ENCODE measurements at regions of chr13 and their contacts with region 1.

Region 1: DNA sequence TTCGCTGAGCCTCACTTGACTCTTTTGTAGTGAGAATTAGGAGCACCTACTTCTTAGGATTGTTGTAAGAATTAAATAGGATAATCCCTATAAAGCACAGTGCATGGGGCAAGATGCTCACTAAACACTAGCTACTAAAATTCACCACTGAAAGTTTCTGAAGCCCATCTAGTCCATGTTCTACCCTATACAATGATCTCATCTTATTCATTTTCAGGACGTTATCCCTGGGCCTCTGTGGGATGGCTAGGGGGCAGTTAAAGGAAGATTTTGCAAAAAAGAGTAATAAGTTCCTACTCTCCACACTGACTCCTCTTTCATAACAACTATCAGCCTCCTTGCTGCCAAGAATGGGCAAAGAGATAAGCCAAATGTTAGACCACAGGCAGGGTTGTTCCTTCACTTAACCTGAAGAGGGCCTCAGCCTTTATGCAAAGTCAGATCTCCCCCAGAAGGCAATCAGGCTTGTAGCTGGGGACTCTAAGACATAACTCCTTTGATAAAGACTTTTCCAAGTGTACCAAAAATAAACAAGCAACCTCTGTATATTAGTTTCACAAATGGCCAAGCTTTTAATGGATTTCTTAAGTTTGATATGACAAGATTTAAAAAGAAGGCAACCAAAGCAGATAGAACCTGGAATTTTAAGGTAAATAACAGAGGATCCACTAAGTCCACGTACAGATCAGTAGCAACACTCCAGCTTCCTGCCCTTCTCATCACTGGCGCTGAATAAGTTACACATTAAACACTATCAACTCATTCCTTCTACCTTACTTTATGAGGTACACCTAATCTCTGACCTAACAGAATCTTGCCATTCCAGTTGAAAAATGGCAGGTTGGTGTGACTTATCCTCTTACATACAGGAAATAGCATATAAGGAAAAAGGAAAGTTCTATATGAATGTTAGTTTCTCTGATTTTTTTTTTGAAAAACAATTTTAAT is 44.4 kb downstream of the ELF1 start:
- DNase-seq: peak in 27 of 35 experiments; percentile 14 to 77 (median 35)
- ATAC-seq: peak; percentile 75 to 82 (median 78)
- H3K4me3 ChIP-seq: no peak overlapping the region
- H3K4me3 Mint-ChIP-seq: peak overlapping the region; percentile 64 to 96 (median 70)
- H3K27ac ChIP-seq: peak overlapping the region; percentile 47
- H3K27ac Mint-ChIP-seq: peak overlapping the region; percentile 87 to 92
- H3K4me1 ChIP-seq: peaks cover 29 to 68% of the 10 kb centered on the region in 2 experiments
- H3K4me1 Mint-ChIP-seq: peaks cover 84 to 99% (median 94%) of the 10 kb centered on the region in 3 donors
- H3K27me3 ChIP-seq: no peaks in the 10 kb centered on the region
- H3K27me3 Mint-ChIP-seq: no peaks in the 10 kb centered on the region

Region 2: DNA sequence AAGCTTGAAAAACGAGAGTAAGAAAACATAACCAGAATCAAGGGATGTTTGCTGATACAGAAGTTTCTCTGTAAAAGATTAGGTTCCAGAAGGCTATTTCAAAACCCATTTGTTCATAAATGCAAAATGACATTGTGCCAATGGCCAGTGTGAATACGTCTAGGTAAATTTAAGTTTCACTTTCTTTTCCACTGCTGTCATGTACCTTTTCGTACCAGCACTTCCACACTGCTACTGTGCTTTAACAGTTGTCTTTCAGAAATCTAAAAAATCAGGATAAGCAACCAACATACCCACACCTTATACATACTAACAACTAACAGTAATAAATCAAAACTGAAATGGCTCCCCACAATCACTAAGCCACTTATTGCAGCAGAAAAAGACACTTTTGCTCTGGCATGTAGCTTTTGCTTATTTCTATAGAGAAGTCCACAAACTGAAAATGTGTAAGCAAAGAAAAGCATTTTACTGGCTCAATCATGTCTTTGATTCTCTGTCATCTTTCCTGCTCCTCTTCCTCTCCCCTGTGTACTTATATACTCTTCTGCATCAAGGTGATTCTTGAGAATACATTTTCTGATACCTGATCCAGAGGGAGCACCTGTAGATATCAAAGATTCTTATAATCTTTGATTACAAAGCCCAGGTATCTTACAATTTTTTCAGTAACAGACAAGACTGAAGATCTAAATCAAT is 10.1 kb after region 1 on chr13:
- CTCF ChIA-PET with region 1: interaction called, 6 to 25 read pairs
- POLR2A ChIA-PET with region 1: interaction called in 1 of 2 experiments, 13 read pairs
- DNase-seq: peak in 1 of 35 experiments; percentile 73
- ATAC-seq: peak; percentile 39 to 54 (median 46)
- H3K4me3 ChIP-seq: peak overlapping the region; percentile 39 to 45
- H3K4me3 Mint-ChIP-seq: peak overlapping the region; percentile 79 to 96 (median 85)
- H3K27ac ChIP-seq: peak overlapping the region; percentile 94
- H3K27ac Mint-ChIP-seq: peak overlapping the region; percentile 93 to 98
- H3K4me1 ChIP-seq: peaks cover 27 to 47% of the 10 kb centered on the region in 2 experiments
- H3K4me1 Mint-ChIP-seq: peaks cover 56 to 72% (median 70%) of the 10 kb centered on the region in 3 donors
- H3K27me3 ChIP-seq: no peaks in the 10 kb centered on the region
- H3K27me3 Mint-ChIP-seq: no peaks in the 10 kb centered on the region

Region 3: GRCh38 chr13:40992678-40993518 is 18.2 kb after region 1 on chr13:
- CTCF ChIA-PET with region 1: interaction called, 6 to 16 read pairs
- POLR2A ChIA-PET with region 1: interaction called in 1 of 2 experiments, 9 read pairs
- DNase-seq: peak in 1 of 35 experiments; percentile 56
- ATAC-seq: peak; percentile 41 to 64 (median 48)
- H3K4me3 ChIP-seq: no peak overlapping the region
- H3K4me3 Mint-ChIP-seq: no peak overlapping the region
- H3K27ac ChIP-seq: peak overlapping the region; percentile 60
- H3K27ac Mint-ChIP-seq: peak overlapping the region; percentile 80 to 90
- H3K4me1 ChIP-seq: peaks cover 31 to 40% of the 10 kb centered on the region in 2 experiments
- H3K4me1 Mint-ChIP-seq: peaks cover 82 to 91% (median 88%) of the 10 kb centered on the region in 3 donors
- H3K27me3 ChIP-seq: no peaks in the 10 kb centered on the region
- H3K27me3 Mint-ChIP-seq: no peaks in the 10 kb centered on the region

Region 4: GRCh38 chr13:41013835-41014234 is 39.1 kb after region 1 on chr13:
- CTCF ChIA-PET with region 1: interaction called, 4 to 35 read pairs
- POLR2A ChIA-PET with region 1: interaction called, 5 to 25 read pairs
- DNase-seq: no peak
- ATAC-seq: no peak
- H3K4me3 ChIP-seq: peak overlapping the region in 1 of 2 donors; percentile 47
- H3K4me3 Mint-ChIP-seq: peak overlapping the region; percentile 85 to 90 (median 87)
- H3K27ac ChIP-seq: peak overlapping the region; percentile 69
- H3K27ac Mint-ChIP-seq: peak overlapping the region; percentile 94 to 96
- H3K4me1 ChIP-seq: peaks cover 16 to 51% of the 10 kb centered on the region in 2 experiments
- H3K4me1 Mint-ChIP-seq: peaks cover 53 to 75% (median 56%) of the 10 kb centered on the region in 3 donors
- H3K27me3 ChIP-seq: no peaks in the 10 kb centered on the region
- H3K27me3 Mint-ChIP-seq: no peaks in the 10 kb centered on the region

Region 5: DNA sequence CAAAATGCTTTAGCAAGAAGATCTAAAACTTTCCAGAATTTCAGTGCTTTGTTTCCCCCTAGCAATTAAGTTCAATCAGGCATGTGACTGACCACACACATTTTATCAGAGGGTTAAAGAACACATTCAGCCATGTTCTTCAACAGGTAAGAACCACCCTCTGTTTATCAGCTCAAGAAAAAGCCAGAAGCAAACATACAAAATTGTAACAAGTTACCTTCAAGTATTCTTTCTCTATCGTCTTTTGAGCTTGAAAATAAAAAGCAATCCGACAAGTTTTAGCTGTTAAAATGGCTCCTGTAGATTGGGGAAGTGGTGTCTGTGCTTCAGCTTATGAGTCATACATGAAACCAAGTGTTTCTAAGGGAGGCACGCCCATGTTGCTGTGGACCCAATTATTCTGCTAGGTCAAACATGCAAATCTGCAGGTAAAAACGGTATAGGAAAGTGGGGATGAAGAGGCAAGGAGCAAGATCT is 44.3 kb after region 1 on chr13 and contains the start of gene ELF1:
- CTCF ChIA-PET with region 1: interaction called, 5 to 35 read pairs
- POLR2A ChIA-PET with region 1: interaction called, 3 to 25 read pairs
- DNase-seq: peak; percentile 10 to 84 (median 51)
- ATAC-seq: peak; percentile 90 to 96 (median 94)
- H3K4me3 ChIP-seq: peak within 1 kb of the TSS; percentile 64 to 65
- H3K4me3 Mint-ChIP-seq: peak within 1 kb of the TSS; percentile 85 to 92 (median 90)
- H3K27ac ChIP-seq: peak within 1 kb of the TSS; percentile 95
- H3K27ac Mint-ChIP-seq: peak within 1 kb of the TSS; percentile 95 to 97
- H3K4me1 ChIP-seq: peaks cover 8 to 33% of the 10 kb centered on the region in 2 experiments
- H3K4me1 Mint-ChIP-seq: peaks cover 44 to 63% (median 51%) of the 10 kb centered on the region in 3 donors
- H3K27me3 ChIP-seq: no peaks in the 10 kb centered on the region
- H3K27me3 Mint-ChIP-seq: no peaks in the 10 kb centered on the region
- total RNA-seq, gene ELF1: 133 to 221 (median 146) TPM

Region 6: GRCh38 chr13:41054212-41054877 is 79.6 kb after region 1 on chr13:
- CTCF ChIA-PET with region 1: interaction called, 13 to 34 read pairs
- POLR2A ChIA-PET with region 1: no interaction called
- DNase-seq: peak in 27 of 35 experiments; percentile 7 to 79 (median 31)
- ATAC-seq: peak; percentile 70 to 79 (median 75)
- H3K4me3 ChIP-seq: no peak overlapping the region
- H3K4me3 Mint-ChIP-seq: peak overlapping the region in 1 of 3 donors; percentile 8
- H3K27ac ChIP-seq: no peak overlapping the region
- H3K27ac Mint-ChIP-seq: peak overlapping the region in 1 of 2 donors; percentile 77
- H3K4me1 ChIP-seq: peaks cover 4 to 9% of the 10 kb centered on the region in 2 experiments
- H3K4me1 Mint-ChIP-seq: peaks cover 52 to 59% (median 54%) of the 10 kb centered on the region in 3 donors
- H3K27me3 ChIP-seq: no peaks in the 10 kb centered on the region
- H3K27me3 Mint-ChIP-seq: no peaks in the 10 kb centered on the region

Region 7: GRCh38 chr13:41061075-41061913 is 86.6 kb after region 1 on chr13 and contains the start of gene WBP4:
- CTCF ChIA-PET with region 1: interaction called, 4 to 13 read pairs
- POLR2A ChIA-PET with region 1: interaction called in 1 of 2 experiments, 4 read pairs
- DNase-seq: peak; percentile 62 to 95 (median 78)
- ATAC-seq: peak; percentile 67 to 74 (median 68)
- H3K4me3 ChIP-seq: peak within 1 kb of the TSS; percentile 96 to 99
- H3K4me3 Mint-ChIP-seq: peak within 1 kb of the TSS; percentile 98 to 100 (median 99)
- H3K27ac ChIP-seq: peak within 1 kb of the TSS; percentile 82
- H3K27ac Mint-ChIP-seq: peak within 1 kb of the TSS; percentile 99 to 100
- H3K4me1 ChIP-seq: peaks cover 11 to 15% of the 10 kb centered on the region in 2 experiments
- H3K4me1 Mint-ChIP-seq: peaks cover 56 to 69% (median 60%) of the 10 kb centered on the region in 3 donors
- H3K27me3 ChIP-seq: no peaks in the 10 kb centered on the region
- H3K27me3 Mint-ChIP-seq: no peaks in the 10 kb centered on the region
- total RNA-seq, gene WBP4: 4.3 to 7.6 (median 4.8) TPM

Region 8: DNA sequence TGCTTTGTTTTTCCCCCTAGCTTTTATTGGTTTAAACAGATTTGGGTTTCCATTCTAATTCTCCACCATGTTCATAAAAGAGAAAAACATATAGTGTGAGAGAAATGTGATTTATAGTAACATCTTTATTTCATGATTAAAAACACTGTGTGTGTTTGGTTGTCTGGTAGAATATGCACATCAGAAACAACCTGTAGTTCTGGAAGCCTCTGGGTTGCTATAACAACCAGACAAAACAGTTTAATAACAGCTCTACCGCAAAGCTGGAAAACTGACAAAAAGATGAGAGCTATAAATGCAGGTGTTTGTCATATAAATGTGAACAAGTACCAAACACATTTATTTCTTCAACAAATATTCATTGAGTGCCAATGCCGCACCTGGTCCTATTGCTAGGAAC is 148.1 kb after region 1 on chr13:
- CTCF ChIA-PET with region 1: no interaction called
- POLR2A ChIA-PET with region 1: no interaction called
- DNase-seq: peak in 2 of 35 experiments; percentile 14 to 56
- ATAC-seq: peak in 2 of 4 experiments; percentile 27 to 72
- H3K4me3 ChIP-seq: no peak overlapping the region
- H3K4me3 Mint-ChIP-seq: no peak overlapping the region
- H3K27ac ChIP-seq: no peak overlapping the region
- H3K27ac Mint-ChIP-seq: no peak overlapping the region
- H3K4me1 ChIP-seq: no peaks in the 10 kb centered on the region
- H3K4me1 Mint-ChIP-seq: peaks cover 13 to 19% (median 15%) of the 10 kb centered on the region in 3 donors
- H3K27me3 ChIP-seq: no peaks in the 10 kb centered on the region
- H3K27me3 Mint-ChIP-seq: no peaks in the 10 kb centered on the region

Measured in T-cell (primary cell).